ENCODE measurements at regions of chr2 and their contacts with region 1.

Region 1: DNA sequence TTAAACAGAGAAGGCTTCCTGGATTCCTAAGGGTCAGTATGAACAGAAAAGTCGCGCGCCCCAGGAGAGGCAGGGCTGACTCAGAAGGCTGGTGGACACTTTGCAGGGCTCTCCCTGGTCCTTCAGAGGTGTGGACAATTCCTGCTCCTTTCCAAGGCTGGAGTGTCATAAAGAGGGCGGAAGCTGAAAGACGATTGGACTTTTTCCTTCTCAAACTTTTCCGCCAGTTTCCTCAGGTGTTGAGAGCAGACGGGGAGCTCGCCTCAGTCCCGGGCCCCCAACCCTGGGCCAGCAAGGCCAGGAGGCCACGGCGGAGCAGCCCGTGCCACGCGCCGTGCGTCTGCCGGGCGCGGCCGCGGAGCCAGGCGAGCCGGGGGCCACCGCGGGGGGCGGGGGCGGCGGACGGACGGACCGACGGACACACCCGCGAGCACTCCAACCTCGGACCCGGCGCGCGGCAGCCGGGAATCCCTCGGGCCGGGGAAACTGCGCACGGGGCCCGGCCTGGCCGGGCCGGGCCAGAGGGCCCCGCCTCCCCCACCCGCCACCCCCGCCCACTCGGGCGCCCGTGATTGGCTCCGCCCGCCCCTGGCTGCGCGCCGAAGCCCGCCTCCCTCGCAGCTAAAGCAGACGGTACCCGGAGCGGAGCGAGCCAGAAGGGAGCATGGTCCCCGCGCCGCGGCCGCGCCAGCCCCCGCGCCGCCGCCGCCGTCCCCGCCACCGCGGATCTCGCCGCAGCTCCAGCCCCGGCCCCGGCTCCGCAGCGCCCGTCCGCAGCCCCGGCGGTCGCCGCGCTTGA is at the start of gene KLHL29:
- DNase-seq: peak; percentile 85
- H3K4me3 ChIP-seq: peak within 1 kb of the TSS; percentile 62 to 70
- H3K27ac ChIP-seq: peak within 1 kb of the TSS; percentile 78 to 79
- H3K4me1 ChIP-seq: no peaks in the 10 kb centered on the region
- H3K27me3 ChIP-seq: no peaks in the 10 kb centered on the region
- CTCF ChIP-seq: no peak
- POLR2A ChIP-seq: peak; percentile 81
- total RNA-seq, gene KLHL29: 23.3 to 24.8 TPM

Region 2: GRCh38 chr2:23505218-23505983 is 120.7 kb after region 1 on chr2:
- intact Hi-C with region 1: loop called (anchors 5 kb)
- DNase-seq: no peak
- H3K4me3 ChIP-seq: no peak overlapping the region
- H3K27ac ChIP-seq: no peak overlapping the region
- H3K4me1 ChIP-seq: peaks cover 10% of the 10 kb centered on the region
- H3K27me3 ChIP-seq: no peaks in the 10 kb centered on the region
- CTCF ChIP-seq: no peak
- POLR2A ChIP-seq: no peak

Region 3: GRCh38 chr2:23617167-23617810 is 232.5 kb after region 1 on chr2:
- intact Hi-C with region 1: loop called (anchors 5 kb)
- DNase-seq: peak; percentile 74
- H3K4me3 ChIP-seq: peak overlapping the region in 1 of 2 donors; percentile 3
- H3K27ac ChIP-seq: peak overlapping the region; percentile 66 to 83
- H3K4me1 ChIP-seq: peaks cover 4% of the 10 kb centered on the region
- H3K27me3 ChIP-seq: no peaks in the 10 kb centered on the region
- CTCF ChIP-seq: peak in 3 of 4 experiments; percentile 29 to 63 (median 59)
- POLR2A ChIP-seq: no peak

Region 4: GRCh38 chr2:23760736-23761135 is 376.0 kb after region 1 on chr2:
- intact Hi-C with region 1: loop called (anchors 5 kb)
- DNase-seq: no peak
- H3K4me3 ChIP-seq: no peak overlapping the region
- H3K27ac ChIP-seq: no peak overlapping the region
- H3K4me1 ChIP-seq: no peaks in the 10 kb centered on the region
- H3K27me3 ChIP-seq: no peaks in the 10 kb centered on the region
- CTCF ChIP-seq: peak in 3 of 4 experiments; percentile 19 to 48 (median 40)
- POLR2A ChIP-seq: no peak

Measured in prostate gland (tissue), 2 donors.